Posterior vena cava (tissue), 2 donors: ENCODE measurements at regions of chr12 and their contacts with region 1.

Region 1: GRCh38 chr12:85036241-85036707 is at the starts of genes LRRIQ1 and TSPAN19:
- DNase-seq: peak; percentile 76
- total RNA-seq, gene LRRIQ1: 0.14 TPM in 1 of 2 donors, not detected in the other
- total RNA-seq, gene TSPAN19: not detected

Region 2: DNA sequence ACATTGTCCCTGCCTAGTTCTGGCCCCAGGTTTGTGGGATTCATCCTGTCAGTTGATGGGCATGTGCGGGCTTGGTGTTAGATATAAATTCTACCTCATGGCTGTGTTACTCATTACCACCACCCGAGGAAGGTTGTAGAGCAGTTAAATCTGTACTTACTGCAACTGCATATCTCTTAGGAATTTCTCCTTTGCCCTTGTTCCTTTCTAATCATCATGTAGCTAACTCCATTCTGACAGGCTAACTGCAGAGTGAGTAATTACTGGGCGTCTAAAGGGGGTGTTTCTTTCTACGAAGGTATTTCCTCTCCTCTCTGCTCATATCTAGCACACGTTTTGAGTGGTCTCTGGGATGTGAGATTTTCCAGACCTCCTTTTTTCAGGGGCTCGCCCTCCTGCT is 1272.8 kb before region 1 on chr12:
- intact Hi-C with region 1: no loop called
- DNase-seq: no peak

Region 3: GRCh38 chr12:84874125-84874824 is 162.0 kb before region 1 on chr12:
- intact Hi-C with region 1: loop called in 1 of 2 experiments (anchors 10 kb)
- DNase-seq: no peak